Uterus (tissue), 4 donors: ENCODE measurements at regions of chr7 and their contacts with region 1.

Region 1: DNA sequence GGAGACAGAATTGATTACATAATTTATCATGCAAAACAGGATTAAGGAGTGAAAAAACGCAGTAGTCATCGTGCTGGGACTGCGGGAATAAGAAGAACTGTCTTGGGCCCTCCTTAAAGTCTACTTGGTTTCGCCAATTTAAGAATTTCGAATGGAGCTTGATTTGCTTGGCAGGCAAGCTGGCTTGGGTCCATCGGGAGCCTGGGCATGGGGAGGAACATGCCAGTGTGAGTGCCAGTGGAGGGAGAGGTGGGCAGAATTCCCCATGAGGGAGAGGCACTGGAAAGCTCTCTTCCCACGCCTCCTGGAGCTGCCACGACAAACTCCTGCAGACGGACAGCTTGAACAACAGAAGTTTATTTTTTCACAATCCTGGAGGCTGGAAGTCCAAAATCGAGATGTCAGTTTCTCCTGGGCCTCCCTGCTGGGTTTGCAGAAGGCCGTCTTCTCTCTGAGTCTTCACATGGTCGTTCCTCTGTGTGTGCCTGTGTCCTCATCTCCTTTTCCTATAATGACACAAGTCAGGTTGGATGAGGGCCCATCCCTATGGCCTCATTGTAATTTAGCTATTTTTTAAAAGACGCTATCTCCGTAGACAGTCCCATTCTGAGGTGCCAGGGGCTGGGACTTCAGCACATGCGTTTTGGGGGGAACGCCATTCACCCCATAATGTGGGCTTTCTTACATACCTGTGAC is 528.7 kb upstream of the DPP6 start:
- DNase-seq: peak in 1 of 2 donors; percentile 26
- H3K4me3 ChIP-seq: no peak overlapping the region
- H3K27ac ChIP-seq: peak overlapping the region; percentile 87 to 93
- H3K4me1 ChIP-seq: peaks cover 0 to 6% of the 10 kb centered on the region in 2 donors
- H3K27me3 ChIP-seq: no peaks in the 10 kb centered on the region
- CTCF ChIP-seq: no peak
- POLR2A ChIP-seq: no peak

Region 2: GRCh38 chr7:153381275-153382040 is 142.0 kb before region 1 on chr7:
- intact Hi-C with region 1: loop called (anchors 2 kb)
- DNase-seq: peak; percentile 56 to 60
- H3K4me3 ChIP-seq: no peak overlapping the region
- H3K27ac ChIP-seq: peak overlapping the region; percentile 73 to 80
- H3K4me1 ChIP-seq: peaks cover 0 to 9% of the 10 kb centered on the region in 2 donors
- H3K27me3 ChIP-seq: no peaks in the 10 kb centered on the region
- CTCF ChIP-seq: peak; percentile 70 to 88 (median 81)
- POLR2A ChIP-seq: no peak